ENCODE measurements at regions of chr1 and their contacts with region 1.

Region 1: DNA sequence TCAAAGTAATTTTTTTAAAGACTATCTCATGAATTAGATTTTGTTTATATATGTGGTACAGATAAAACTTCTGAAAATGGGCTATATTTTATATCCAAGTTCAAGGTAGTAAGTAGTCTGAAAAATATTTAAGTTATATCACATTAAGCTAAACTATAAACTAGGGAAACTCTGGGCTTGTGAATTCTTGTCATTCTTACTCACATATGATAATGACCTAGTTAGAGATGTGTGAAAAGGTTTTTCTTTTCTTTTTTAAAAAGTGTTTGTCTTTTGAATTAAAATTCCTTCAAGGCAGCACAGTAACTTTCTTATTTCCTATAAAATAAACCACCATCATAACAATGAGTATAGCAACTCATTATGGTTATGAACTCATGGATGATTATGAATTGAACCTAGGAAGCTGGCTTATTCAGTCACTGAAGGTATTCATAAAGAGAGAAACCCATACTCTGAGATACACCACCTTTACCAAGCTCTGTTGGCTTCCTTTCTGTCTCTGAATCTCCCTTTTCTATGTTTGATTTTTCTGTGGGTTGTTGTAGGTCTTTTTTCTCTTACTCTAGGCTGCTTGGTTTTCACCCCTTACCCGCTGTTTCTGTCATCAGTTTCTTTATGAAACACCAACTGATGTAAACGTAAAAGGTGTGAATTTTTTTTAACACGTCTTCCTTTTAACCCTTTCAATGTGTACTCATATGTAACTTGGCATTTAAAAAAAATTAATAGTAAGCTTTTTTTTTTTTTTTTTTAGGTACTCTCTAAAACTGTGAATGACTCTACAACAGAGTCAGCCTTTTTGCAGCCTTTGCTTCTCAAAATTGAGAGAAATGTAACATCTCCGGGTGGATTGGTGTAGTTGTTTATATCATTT is 25.2 kb downstream of the IL12RB2 start:
- DNase-seq: peak; percentile 74
- ATAC-seq: peak; percentile 85
- H3K4me3 Mint-ChIP-seq: peak overlapping the region; percentile 10
- H3K27ac Mint-ChIP-seq: peak overlapping the region; percentile 91
- H3K4me1 Mint-ChIP-seq: peaks cover 75% of the 10 kb centered on the region
- H3K27me3 Mint-ChIP-seq: no peaks in the 10 kb centered on the region

Region 2: GRCh38 chr1:67347688-67348472 is 15.0 kb after region 1 on chr1:
- CTCF ChIA-PET with region 1: interaction called, 12 read pairs
- DNase-seq: peak; percentile 50
- ATAC-seq: no peak
- H3K4me3 Mint-ChIP-seq: no peak overlapping the region
- H3K27ac Mint-ChIP-seq: no peak overlapping the region
- H3K4me1 Mint-ChIP-seq: peaks cover 17% of the 10 kb centered on the region
- H3K27me3 Mint-ChIP-seq: no peaks in the 10 kb centered on the region